B cell (primary cell): ENCODE measurements at regions of chr3 and their contacts with region 1.

Region 1: DNA sequence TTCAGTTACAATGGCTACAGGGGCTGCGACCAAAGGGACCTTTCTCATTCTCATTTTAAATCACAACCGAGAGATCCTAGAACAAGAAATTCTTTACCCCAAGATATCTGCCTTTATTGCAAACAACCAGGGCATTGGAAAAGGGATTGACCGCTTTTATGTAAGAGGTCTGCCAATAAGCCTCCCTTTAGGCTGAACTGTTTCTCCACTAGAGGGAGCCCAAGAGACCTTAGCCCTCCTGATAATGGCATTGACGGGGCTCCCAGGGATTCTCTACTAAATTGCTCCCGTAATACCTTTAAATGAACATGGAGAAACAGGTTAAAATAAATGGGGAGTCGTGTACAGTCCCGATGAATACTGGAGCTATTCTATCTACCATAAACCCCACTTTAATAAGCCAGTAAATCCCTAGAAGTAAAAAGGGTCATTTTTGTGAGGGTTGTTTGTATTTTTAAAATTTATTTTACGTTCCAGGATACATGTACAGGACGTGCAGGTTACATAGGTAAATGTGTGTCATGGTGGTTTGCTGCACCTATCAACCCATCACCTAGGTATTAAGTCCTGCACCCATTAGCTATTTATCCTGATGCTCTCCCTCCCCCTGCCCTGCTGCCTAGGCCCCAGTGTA is 7.5 kb upstream of the IGSF10 start:
- DNase-seq: peak; percentile 62
- ATAC-seq: peak; percentile 58
- H3K4me3 ChIP-seq: no peak overlapping the region
- H3K4me3 Mint-ChIP-seq: no peak overlapping the region
- H3K27ac ChIP-seq: no peak overlapping the region
- H3K27ac Mint-ChIP-seq: no peak overlapping the region
- H3K4me1 ChIP-seq: peaks cover 0 to 6% of the 10 kb centered on the region in 2 donors
- H3K4me1 Mint-ChIP-seq: peaks cover 9% of the 10 kb centered on the region
- H3K27me3 ChIP-seq: no peaks in the 10 kb centered on the region
- H3K27me3 Mint-ChIP-seq: peaks cover 5% of the 10 kb centered on the region
- CTCF ChIP-seq: peak; percentile 89

Region 2: DNA sequence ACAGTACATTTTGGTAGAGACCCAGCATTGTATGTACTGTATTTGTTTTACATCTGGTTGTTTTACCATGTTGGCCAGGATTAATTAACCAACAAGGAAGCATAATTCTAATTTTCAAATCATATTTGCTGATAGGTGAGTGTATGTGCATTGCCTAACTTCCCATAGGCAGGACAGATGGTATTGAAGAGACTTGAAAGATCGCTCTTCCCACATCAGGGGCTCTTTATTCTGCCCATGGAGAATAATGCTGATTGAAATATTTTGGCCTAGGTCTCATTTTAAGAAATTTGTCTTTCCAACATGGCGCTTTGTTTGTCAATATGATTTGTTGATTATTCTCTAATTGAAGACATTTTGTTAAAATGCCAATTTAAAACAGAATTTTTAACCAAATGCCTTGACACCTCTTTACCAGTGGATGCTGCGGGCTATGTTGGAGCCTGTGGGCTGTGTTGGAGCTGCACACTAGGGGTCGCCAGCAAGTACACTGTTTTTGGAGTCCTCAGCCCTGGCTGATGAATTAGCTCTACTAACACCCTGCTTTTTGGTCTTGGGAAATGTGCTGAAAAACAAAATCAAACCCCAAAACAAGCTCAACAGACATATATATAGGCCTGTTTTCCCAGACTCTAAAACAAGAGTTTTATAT is 89.2 kb before region 1 on chr3:
- CTCF ChIA-PET with region 1: interaction called, 10 read pairs
- POLR2A ChIA-PET with region 1: no interaction called
- intact Hi-C with region 1: loop called (anchors 2 kb)
- DNase-seq: peak; percentile 52
- ATAC-seq: peak; percentile 68
- H3K4me3 ChIP-seq: no peak overlapping the region
- H3K4me3 Mint-ChIP-seq: no peak overlapping the region
- H3K27ac ChIP-seq: no peak overlapping the region
- H3K27ac Mint-ChIP-seq: peak overlapping the region; percentile 48
- H3K4me1 ChIP-seq: peaks cover 27% of the 10 kb centered on the region in 2 donors
- H3K4me1 Mint-ChIP-seq: peaks cover 48% of the 10 kb centered on the region
- H3K27me3 ChIP-seq: no peaks in the 10 kb centered on the region
- H3K27me3 Mint-ChIP-seq: no peaks in the 10 kb centered on the region
- CTCF ChIP-seq: peak; percentile 72

Region 3: DNA sequence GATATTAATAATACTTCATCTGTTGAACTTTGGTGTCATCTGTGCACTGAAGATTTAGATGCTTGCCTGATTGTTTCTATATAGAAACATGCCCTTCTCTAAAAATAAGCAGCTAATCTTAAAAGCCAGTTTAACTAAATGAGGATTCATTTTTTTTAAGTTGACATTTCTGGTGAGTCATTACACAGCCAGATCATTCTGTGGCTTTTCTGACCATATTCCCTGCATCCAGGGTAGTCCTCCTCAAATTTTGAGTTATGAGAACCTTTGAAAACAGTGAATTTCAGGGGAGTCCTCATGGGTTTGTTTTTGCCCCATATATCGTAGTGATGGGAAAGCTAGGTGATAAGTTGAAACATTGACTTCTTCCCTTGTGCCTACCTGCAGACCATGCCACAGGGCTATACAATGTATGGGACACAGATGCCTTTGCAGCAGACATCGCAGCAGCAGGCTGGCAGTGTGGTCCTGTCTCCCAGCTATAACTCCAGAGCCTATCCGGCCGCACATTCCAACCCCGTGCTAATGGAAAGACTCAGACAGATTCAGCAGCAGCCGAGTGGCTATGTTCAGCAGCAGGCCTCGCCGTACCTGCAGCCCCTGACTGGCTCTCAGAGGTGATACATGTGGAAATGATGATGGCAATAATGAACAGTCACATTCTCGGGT is 57.4 kb before region 1 on chr3:
- CTCF ChIA-PET with region 1: interaction called, 12 read pairs
- POLR2A ChIA-PET with region 1: no interaction called
- intact Hi-C with region 1: no loop called
- DNase-seq: no peak
- ATAC-seq: no peak
- H3K4me3 ChIP-seq: no peak overlapping the region
- H3K4me3 Mint-ChIP-seq: peak overlapping the region; percentile 37
- H3K27ac ChIP-seq: no peak overlapping the region
- H3K27ac Mint-ChIP-seq: no peak overlapping the region
- H3K4me1 ChIP-seq: no peaks in the 10 kb centered on the region
- H3K4me1 Mint-ChIP-seq: peaks cover 15% of the 10 kb centered on the region
- H3K27me3 ChIP-seq: no peaks in the 10 kb centered on the region
- H3K27me3 Mint-ChIP-seq: no peaks in the 10 kb centered on the region
- CTCF ChIP-seq: no peak

Region 4: GRCh38 chr3:151445273-151446001 is 23.0 kb before region 1 on chr3:
- CTCF ChIA-PET with region 1: interaction called, 14 read pairs
- POLR2A ChIA-PET with region 1: no interaction called
- intact Hi-C with region 1: no loop called
- DNase-seq: no peak
- ATAC-seq: no peak
- H3K4me3 ChIP-seq: no peak overlapping the region
- H3K4me3 Mint-ChIP-seq: no peak overlapping the region
- H3K27ac ChIP-seq: no peak overlapping the region
- H3K27ac Mint-ChIP-seq: no peak overlapping the region
- H3K4me1 ChIP-seq: no peaks in the 10 kb centered on the region
- H3K4me1 Mint-ChIP-seq: no peaks in the 10 kb centered on the region
- H3K27me3 ChIP-seq: no peaks in the 10 kb centered on the region
- H3K27me3 Mint-ChIP-seq: peaks cover 10% of the 10 kb centered on the region
- CTCF ChIP-seq: no peak

Region 5: GRCh38 chr3:151918253-151919029 is 450.0 kb after region 1 on chr3:
- CTCF ChIA-PET with region 1: interaction called, 3 read pairs
- POLR2A ChIA-PET with region 1: no interaction called
- intact Hi-C with region 1: loop called (anchors 1 kb)
- DNase-seq: peak; percentile 40
- ATAC-seq: no peak
- H3K4me3 ChIP-seq: no peak overlapping the region
- H3K4me3 Mint-ChIP-seq: no peak overlapping the region
- H3K27ac ChIP-seq: no peak overlapping the region
- H3K27ac Mint-ChIP-seq: no peak overlapping the region
- H3K4me1 ChIP-seq: no peaks in the 10 kb centered on the region
- H3K4me1 Mint-ChIP-seq: no peaks in the 10 kb centered on the region
- H3K27me3 ChIP-seq: no peaks in the 10 kb centered on the region
- H3K27me3 Mint-ChIP-seq: no peaks in the 10 kb centered on the region
- CTCF ChIP-seq: peak; percentile 65